Colonic mucosa (tissue), 4 donors: ENCODE measurements at regions of chr12 and their contacts with region 1.

Region 1: GRCh38 chr12:45388545-45388944 is 172.7 kb downstream of the ANO6 start:
- DNase-seq: peak; percentile 26
- H3K4me3 ChIP-seq: no peak overlapping the region
- H3K27ac ChIP-seq: no peak overlapping the region
- H3K4me1 ChIP-seq: no peaks in the 10 kb centered on the region
- H3K27me3 ChIP-seq: no peaks in the 10 kb centered on the region
- CTCF ChIP-seq: peak; percentile 44

Region 2: DNA sequence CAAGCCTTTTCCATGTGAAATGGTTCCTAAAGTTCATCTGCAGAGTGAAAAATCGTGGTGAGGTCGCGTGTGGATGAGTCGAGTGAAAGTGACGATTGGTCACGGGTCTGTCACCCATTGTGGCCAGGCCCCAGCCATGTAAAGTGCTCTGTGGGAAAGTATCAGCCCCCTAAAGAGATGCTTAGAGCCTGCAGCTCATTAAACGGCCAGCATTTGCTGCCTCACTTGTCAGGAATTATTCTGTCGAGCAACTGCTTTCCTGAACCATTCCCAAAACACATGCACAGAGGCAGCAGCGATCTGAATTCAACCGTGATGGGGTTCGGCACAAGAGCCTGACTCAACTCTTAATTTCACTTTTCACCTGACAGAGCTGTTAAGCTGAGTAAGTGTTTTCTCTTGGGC is 353.7 kb before region 1 on chr12:
- intact Hi-C with region 1: no loop called
- DNase-seq: no peak
- H3K4me3 ChIP-seq: no peak overlapping the region
- H3K27ac ChIP-seq: no peak overlapping the region
- H3K4me1 ChIP-seq: no peaks in the 10 kb centered on the region
- H3K27me3 ChIP-seq: no peaks in the 10 kb centered on the region
- CTCF ChIP-seq: no peak

Region 3: DNA sequence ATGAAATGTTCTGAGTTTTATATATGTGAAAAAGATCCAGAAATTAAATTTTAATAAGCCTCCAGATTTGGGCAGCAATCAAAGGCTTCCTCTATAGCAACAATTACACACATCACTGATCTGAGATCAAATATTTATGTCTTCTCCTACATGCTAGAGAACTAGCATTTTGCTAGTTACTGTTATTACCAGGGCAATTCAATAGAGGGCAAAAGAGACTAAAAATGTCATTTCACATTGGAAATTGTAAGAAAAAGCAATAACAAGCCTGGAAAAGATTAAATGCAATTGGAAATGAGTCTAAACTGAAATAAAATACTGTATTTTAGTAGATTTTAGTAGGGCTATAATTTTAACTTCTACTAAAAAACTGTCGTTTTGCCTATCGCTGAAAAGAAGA is 205.3 kb before region 1 on chr12:
- intact Hi-C with region 1: loop called (anchors 5 kb)
- DNase-seq: no peak
- H3K4me3 ChIP-seq: no peak overlapping the region
- H3K27ac ChIP-seq: no peak overlapping the region
- H3K4me1 ChIP-seq: no peaks in the 10 kb centered on the region
- H3K27me3 ChIP-seq: no peaks in the 10 kb centered on the region
- CTCF ChIP-seq: no peak

Region 4: GRCh38 chr12:45324391-45324790 is 64.2 kb before region 1 on chr12:
- intact Hi-C with region 1: no loop called
- DNase-seq: no peak
- H3K4me3 ChIP-seq: no peak overlapping the region
- H3K27ac ChIP-seq: no peak overlapping the region
- H3K4me1 ChIP-seq: no peaks in the 10 kb centered on the region
- H3K27me3 ChIP-seq: no peaks in the 10 kb centered on the region
- CTCF ChIP-seq: no peak

Region 5: GRCh38 chr12:45981075-45981837 is 592.7 kb after region 1 on chr12:
- intact Hi-C with region 1: no loop called
- DNase-seq: no peak
- H3K4me3 ChIP-seq: no peak overlapping the region
- H3K27ac ChIP-seq: no peak overlapping the region
- H3K4me1 ChIP-seq: no peaks in the 10 kb centered on the region
- H3K27me3 ChIP-seq: no peaks in the 10 kb centered on the region
- CTCF ChIP-seq: no peak